ENCODE measurements at regions of chr11 and their contacts with region 1.

Region 1: GRCh38 chr11:12813371-12814225 is 139.4 kb downstream of the TEAD1 start:
- DNase-seq: peak; percentile 54 to 72
- ATAC-seq: peak; percentile 25 to 36
- H3K4me3 ChIP-seq: no peak overlapping the region
- H3K27ac ChIP-seq: peak overlapping the region; percentile 83 to 91 (median 87)
- H3K4me1 ChIP-seq: peaks cover 77 to 86% of the 10 kb centered on the region in 2 donors
- H3K27me3 ChIP-seq: no peaks in the 10 kb centered on the region
- CTCF ChIP-seq: peak in 3 of 5 experiments; percentile 24 to 45 (median 31)
- POLR2A ChIP-seq: no peak

Region 2: GRCh38 chr11:12599408-12600143 is 214.0 kb before region 1 on chr11:
- in situ Hi-C with region 1: no loop called
- intact Hi-C with region 1: loop called (anchors 10 kb)
- DNase-seq: peak in 1 of 2 donors; percentile 36
- ATAC-seq: peak; percentile 65 to 86
- H3K4me3 ChIP-seq: no peak overlapping the region
- H3K27ac ChIP-seq: no peak overlapping the region
- H3K4me1 ChIP-seq: peaks cover 0 to 6% of the 10 kb centered on the region in 2 donors
- H3K27me3 ChIP-seq: no peaks in the 10 kb centered on the region
- CTCF ChIP-seq: peak; percentile 48 to 82 (median 66)
- POLR2A ChIP-seq: no peak

Measured in gastrocnemius medialis (tissue), 4 donors.